CD4-positive, alpha-beta memory T cell (primary cell): ENCODE measurements at regions of chr4 and their contacts with region 1.

Region 1: DNA sequence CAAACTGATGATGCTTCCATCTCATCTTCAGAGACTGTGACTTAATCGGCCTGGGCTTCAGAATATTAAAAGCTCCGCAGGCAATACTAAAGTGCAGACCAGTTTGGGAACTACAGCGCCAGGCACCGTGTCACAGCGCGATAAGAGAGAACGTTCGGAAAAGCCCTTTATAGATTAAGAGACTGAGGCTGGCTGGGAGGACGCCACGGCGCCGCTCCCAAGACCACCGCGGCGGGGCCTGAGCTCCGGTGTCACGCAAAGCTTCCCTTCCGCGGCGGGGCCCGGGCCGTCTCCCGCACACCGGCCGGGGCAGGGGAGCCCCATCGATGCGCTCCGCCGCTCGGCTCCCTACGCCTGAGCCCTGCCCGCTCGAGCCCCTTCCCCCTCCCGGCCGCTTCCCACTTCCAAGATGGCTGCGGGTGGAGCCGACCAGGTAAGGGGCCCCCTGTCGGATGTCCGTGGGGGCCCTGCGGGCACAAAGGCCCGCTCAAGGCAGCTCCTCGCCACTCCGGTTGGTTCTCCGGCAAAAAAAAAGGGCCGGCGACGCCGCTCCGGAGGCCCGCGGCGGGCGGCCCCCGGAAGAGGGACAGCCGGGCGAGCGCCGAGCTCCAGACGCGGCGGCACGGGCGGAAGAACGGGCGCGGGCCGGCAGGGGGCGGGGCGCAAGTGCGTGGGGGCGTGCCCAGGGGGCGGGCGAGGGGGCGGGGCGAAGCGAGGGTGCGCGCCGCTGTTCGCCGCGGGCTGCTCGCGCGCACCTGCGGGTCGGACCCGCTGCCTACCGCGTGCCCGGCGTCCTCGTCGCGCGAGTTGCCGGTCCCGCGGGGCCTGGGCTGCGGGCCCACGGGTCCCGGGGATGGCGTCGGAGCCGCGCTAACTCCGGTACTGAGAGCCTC is at the start of gene TBC1D14:
- DNase-seq: peak; percentile 88 to 92 (median 90)
- H3K4me3 ChIP-seq: peak within 1 kb of the TSS; percentile 77 to 78
- H3K4me3 Mint-ChIP-seq: peak within 1 kb of the TSS; percentile 90 to 95 (median 91)
- H3K27ac ChIP-seq: peak within 1 kb of the TSS; percentile 81
- H3K27ac Mint-ChIP-seq: peak within 1 kb of the TSS; percentile 88 to 96 (median 91)
- H3K4me1 ChIP-seq: peaks cover 63% of the 10 kb centered on the region
- H3K4me1 Mint-ChIP-seq: peaks cover 30 to 67% (median 52%) of the 10 kb centered on the region in 4 donors
- H3K27me3 ChIP-seq: no peaks in the 10 kb centered on the region
- H3K27me3 Mint-ChIP-seq: no peaks in the 10 kb centered on the region
- total RNA-seq, gene TBC1D14: 73.7 to 80.7 TPM

Region 2: GRCh38 chr4:6892190-6892908 is 17.0 kb before region 1 on chr4:
- CTCF ChIA-PET with region 1: interaction called, 7 read pairs
- POLR2A ChIA-PET with region 1: interaction called, 14 read pairs
- intact Hi-C with region 1: no loop called
- DNase-seq: peak; percentile 25 to 56 (median 30)
- H3K4me3 ChIP-seq: peak overlapping the region; percentile 20 to 34
- H3K4me3 Mint-ChIP-seq: peak overlapping the region; percentile 10 to 87 (median 70)
- H3K27ac ChIP-seq: peak overlapping the region; percentile 30
- H3K27ac Mint-ChIP-seq: peak overlapping the region; percentile 13 to 90 (median 82)
- H3K4me1 ChIP-seq: peaks cover 24% of the 10 kb centered on the region
- H3K4me1 Mint-ChIP-seq: peaks cover 12 to 38% (median 24%) of the 10 kb centered on the region in 4 donors
- H3K27me3 ChIP-seq: no peaks in the 10 kb centered on the region
- H3K27me3 Mint-ChIP-seq: no peaks in the 10 kb centered on the region

Region 3: GRCh38 chr4:6926681-6927478 is 17.6 kb after region 1 on chr4:
- CTCF ChIA-PET with region 1: interaction called, 5 read pairs
- POLR2A ChIA-PET with region 1: interaction called, 34 read pairs
- intact Hi-C with region 1: no loop called
- DNase-seq: peak; percentile 43 to 86 (median 55)
- H3K4me3 ChIP-seq: peak overlapping the region; percentile 31 to 33
- H3K4me3 Mint-ChIP-seq: peak overlapping the region; percentile 74 to 88 (median 82)
- H3K27ac ChIP-seq: peak overlapping the region; percentile 6
- H3K27ac Mint-ChIP-seq: peak overlapping the region; percentile 82 to 94 (median 91)
- H3K4me1 ChIP-seq: peaks cover 57% of the 10 kb centered on the region
- H3K4me1 Mint-ChIP-seq: peaks cover 68 to 91% (median 77%) of the 10 kb centered on the region in 4 donors
- H3K27me3 ChIP-seq: no peaks in the 10 kb centered on the region
- H3K27me3 Mint-ChIP-seq: no peaks in the 10 kb centered on the region

Region 4: GRCh38 chr4:6974138-6974848 is 65.0 kb after region 1 on chr4:
- CTCF ChIA-PET with region 1: interaction called, 14 read pairs
- POLR2A ChIA-PET with region 1: interaction called, 18 read pairs
- intact Hi-C with region 1: no loop called
- DNase-seq: peak; percentile 73 to 83 (median 76)
- H3K4me3 ChIP-seq: no peak overlapping the region
- H3K4me3 Mint-ChIP-seq: no peak overlapping the region
- H3K27ac ChIP-seq: no peak overlapping the region
- H3K27ac Mint-ChIP-seq: peak overlapping the region; percentile 48 to 86 (median 72)
- H3K4me1 ChIP-seq: peaks cover 9% of the 10 kb centered on the region
- H3K4me1 Mint-ChIP-seq: peaks cover 18 to 35% (median 19%) of the 10 kb centered on the region in 4 donors
- H3K27me3 ChIP-seq: no peaks in the 10 kb centered on the region
- H3K27me3 Mint-ChIP-seq: no peaks in the 10 kb centered on the region

Region 5: GRCh38 chr4:7042697-7043464 is 133.6 kb after region 1 on chr4 and contains the start of gene TADA2B:
- CTCF ChIA-PET with region 1: interaction called, 4 read pairs
- POLR2A ChIA-PET with region 1: interaction called, 36 read pairs
- intact Hi-C with region 1: loop called (anchors 2 kb)
- DNase-seq: peak; percentile 90 to 94 (median 91)
- H3K4me3 ChIP-seq: peak within 1 kb of the TSS; percentile 83 to 91
- H3K4me3 Mint-ChIP-seq: peak within 1 kb of the TSS; percentile 89 to 97 (median 93)
- H3K27ac ChIP-seq: peak within 1 kb of the TSS; percentile 75
- H3K27ac Mint-ChIP-seq: peak within 1 kb of the TSS; percentile 81 to 95 (median 91)
- H3K4me1 ChIP-seq: peaks cover 45% of the 10 kb centered on the region
- H3K4me1 Mint-ChIP-seq: peaks cover 33 to 61% (median 40%) of the 10 kb centered on the region in 4 donors
- H3K27me3 ChIP-seq: no peaks in the 10 kb centered on the region
- H3K27me3 Mint-ChIP-seq: no peaks in the 10 kb centered on the region
- total RNA-seq, gene TADA2B: 46.4 to 49.0 TPM